ENCODE measurements at regions of chr5 and their contacts with region 1.

Region 1: GRCh38 chr5:131364507-131365050 is 100.7 kb downstream of the CDC42SE2 start:
- DNase-seq: peak in 4 of 14 experiments; percentile 43 to 70 (median 44)
- ATAC-seq: peak; percentile 76
- H3K4me3 ChIP-seq: no peak overlapping the region
- H3K4me3 Mint-ChIP-seq: peak overlapping the region; percentile 63
- H3K27ac ChIP-seq: peak overlapping the region; percentile 32 to 61
- H3K27ac Mint-ChIP-seq: peak overlapping the region; percentile 81
- H3K4me1 ChIP-seq: peaks cover 41% of the 10 kb centered on the region
- H3K4me1 Mint-ChIP-seq: peaks cover 89% of the 10 kb centered on the region
- H3K27me3 ChIP-seq: no peaks in the 10 kb centered on the region
- H3K27me3 Mint-ChIP-seq: no peaks in the 10 kb centered on the region
- CTCF ChIP-seq: no peak

Region 2: DNA sequence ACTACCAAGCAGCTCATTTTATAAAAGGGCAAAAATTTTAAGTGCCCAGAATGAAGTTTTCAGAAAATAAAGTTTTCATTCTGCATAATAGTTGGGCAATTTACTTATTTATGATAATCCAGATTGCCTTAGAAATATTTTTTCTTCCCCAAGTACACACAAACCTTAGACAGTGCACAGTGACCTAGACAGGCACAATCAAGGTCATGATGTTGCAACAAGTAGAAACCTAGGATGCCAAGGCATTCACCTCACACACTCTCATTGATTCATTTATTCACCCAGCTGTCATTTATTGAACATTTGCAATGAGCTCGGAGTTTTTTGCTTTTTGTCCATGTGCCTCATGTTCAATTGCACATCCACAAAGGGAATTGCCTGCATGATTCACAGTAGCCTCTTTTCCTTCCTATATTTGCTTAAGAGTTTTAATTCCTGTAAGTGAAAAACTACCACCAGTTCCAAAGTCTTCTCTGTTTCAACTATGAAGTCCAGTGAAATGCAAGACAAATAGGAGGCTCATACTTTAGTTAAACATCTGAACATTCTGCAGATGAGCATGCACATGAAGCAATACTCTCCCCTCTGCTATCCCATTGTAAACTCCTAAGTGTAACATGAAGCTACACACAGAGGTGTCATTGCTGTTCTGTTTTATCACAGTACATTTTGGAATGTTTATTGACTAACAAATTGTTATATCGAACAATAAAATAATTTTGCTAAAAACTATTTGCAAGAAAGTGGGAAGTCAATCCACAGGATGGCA is 322.4 kb before region 1 on chr5:
- CTCF ChIA-PET with region 1: no interaction called
- POLR2A ChIA-PET with region 1: no interaction called
- intact Hi-C with region 1: no loop called
- DNase-seq: no peak
- ATAC-seq: no peak
- H3K4me3 ChIP-seq: no peak overlapping the region
- H3K4me3 Mint-ChIP-seq: no peak overlapping the region
- H3K27ac ChIP-seq: no peak overlapping the region
- H3K27ac Mint-ChIP-seq: no peak overlapping the region
- H3K4me1 ChIP-seq: no peaks in the 10 kb centered on the region
- H3K4me1 Mint-ChIP-seq: no peaks in the 10 kb centered on the region
- H3K27me3 ChIP-seq: no peaks in the 10 kb centered on the region
- H3K27me3 Mint-ChIP-seq: no peaks in the 10 kb centered on the region
- CTCF ChIP-seq: no peak

Region 3: GRCh38 chr5:131328536-131329285 is 35.9 kb before region 1 on chr5:
- CTCF ChIA-PET with region 1: no interaction called
- POLR2A ChIA-PET with region 1: no interaction called
- intact Hi-C with region 1: loop called in 1 of 2 experiments (anchors 5 kb)
- DNase-seq: no peak
- ATAC-seq: peak; percentile 24
- H3K4me3 ChIP-seq: no peak overlapping the region
- H3K4me3 Mint-ChIP-seq: peak overlapping the region; percentile 26
- H3K27ac ChIP-seq: no peak overlapping the region
- H3K27ac Mint-ChIP-seq: peak overlapping the region; percentile 26
- H3K4me1 ChIP-seq: peaks cover 31% of the 10 kb centered on the region
- H3K4me1 Mint-ChIP-seq: peaks cover 84% of the 10 kb centered on the region
- H3K27me3 ChIP-seq: no peaks in the 10 kb centered on the region
- H3K27me3 Mint-ChIP-seq: no peaks in the 10 kb centered on the region
- CTCF ChIP-seq: no peak

Region 4: GRCh38 chr5:131375351-131375750 is 10.8 kb after region 1 on chr5:
- CTCF ChIA-PET with region 1: interaction called, 5 read pairs
- POLR2A ChIA-PET with region 1: interaction called, 21 read pairs
- intact Hi-C with region 1: loop called in 1 of 2 experiments (anchors 2 kb)
- DNase-seq: peak in 3 of 14 experiments; percentile 57 to 73 (median 63)
- ATAC-seq: no peak
- H3K4me3 ChIP-seq: no peak overlapping the region
- H3K4me3 Mint-ChIP-seq: peak overlapping the region; percentile 52
- H3K27ac ChIP-seq: peak overlapping the region; percentile 55 to 56
- H3K27ac Mint-ChIP-seq: peak overlapping the region; percentile 97
- H3K4me1 ChIP-seq: peaks cover 49% of the 10 kb centered on the region
- H3K4me1 Mint-ChIP-seq: peaks cover 92% of the 10 kb centered on the region
- H3K27me3 ChIP-seq: no peaks in the 10 kb centered on the region
- H3K27me3 Mint-ChIP-seq: no peaks in the 10 kb centered on the region
- CTCF ChIP-seq: no peak

Region 5: GRCh38 chr5:131664929-131665328 is 300.4 kb after region 1 on chr5:
- CTCF ChIA-PET with region 1: no interaction called
- POLR2A ChIA-PET with region 1: no interaction called
- intact Hi-C with region 1: no loop called
- DNase-seq: no peak
- ATAC-seq: no peak
- H3K4me3 ChIP-seq: no peak overlapping the region
- H3K4me3 Mint-ChIP-seq: no peak overlapping the region
- H3K27ac ChIP-seq: no peak overlapping the region
- H3K27ac Mint-ChIP-seq: no peak overlapping the region
- H3K4me1 ChIP-seq: no peaks in the 10 kb centered on the region
- H3K4me1 Mint-ChIP-seq: no peaks in the 10 kb centered on the region
- H3K27me3 ChIP-seq: no peaks in the 10 kb centered on the region
- H3K27me3 Mint-ChIP-seq: no peaks in the 10 kb centered on the region
- CTCF ChIP-seq: no peak